Activated CD4-positive, alpha-beta T cell treated with anti-CD3 and anti-CD28 coated beads for 36 hours (primary cell): ENCODE measurements at regions of chr7 and their contacts with region 1.

Region 1: DNA sequence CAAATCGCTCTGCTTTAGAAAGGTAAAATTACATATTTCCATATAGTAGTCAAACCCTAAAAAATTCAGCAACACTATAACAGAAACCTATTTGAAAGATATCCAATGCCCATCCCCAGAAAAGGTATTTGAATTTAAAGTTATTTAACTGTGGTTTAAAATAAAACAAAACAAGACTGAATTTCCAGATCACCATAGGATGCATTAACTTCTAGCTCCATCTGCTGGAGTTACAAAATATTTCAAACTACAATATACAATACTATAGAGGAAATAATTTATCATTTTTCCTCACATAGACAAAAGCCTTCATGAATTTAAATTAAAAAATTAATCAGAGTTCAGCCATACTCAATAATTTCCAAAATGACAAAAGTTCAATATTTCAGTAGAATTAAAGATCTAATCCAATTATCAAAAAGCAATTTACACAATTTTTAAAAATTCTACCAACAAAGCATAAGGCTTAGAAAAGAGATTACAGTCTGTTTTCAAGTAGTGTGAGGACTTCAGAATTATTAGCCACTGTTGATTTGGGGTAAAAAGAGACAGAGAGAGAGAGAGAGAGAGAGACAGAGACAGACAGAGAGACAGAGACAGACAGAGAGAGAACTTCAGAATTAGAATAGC is 75.9 kb downstream of the LMBR1 start:
- DNase-seq: no peak
- ATAC-seq: no peak
- H3K4me3 Mint-ChIP-seq: no peak overlapping the region
- H3K27ac Mint-ChIP-seq: no peak overlapping the region
- H3K4me1 Mint-ChIP-seq: no peaks in the 10 kb centered on the region
- H3K27me3 Mint-ChIP-seq: no peaks in the 10 kb centered on the region

Region 2: GRCh38 chr7:155796381-155797261 is 1020.4 kb before region 1 on chr7:
- CTCF ChIA-PET with region 1: no interaction called
- POLR2A ChIA-PET with region 1: no interaction called
- intact Hi-C with region 1: loop called in 1 of 2 experiments (anchors 1 kb)
- DNase-seq: peak; percentile 82
- ATAC-seq: peak; percentile 85
- H3K4me3 Mint-ChIP-seq: no peak overlapping the region
- H3K27ac Mint-ChIP-seq: no peak overlapping the region
- H3K4me1 Mint-ChIP-seq: no peaks in the 10 kb centered on the region
- H3K27me3 Mint-ChIP-seq: peaks cover 25% of the 10 kb centered on the region

Region 3: DNA sequence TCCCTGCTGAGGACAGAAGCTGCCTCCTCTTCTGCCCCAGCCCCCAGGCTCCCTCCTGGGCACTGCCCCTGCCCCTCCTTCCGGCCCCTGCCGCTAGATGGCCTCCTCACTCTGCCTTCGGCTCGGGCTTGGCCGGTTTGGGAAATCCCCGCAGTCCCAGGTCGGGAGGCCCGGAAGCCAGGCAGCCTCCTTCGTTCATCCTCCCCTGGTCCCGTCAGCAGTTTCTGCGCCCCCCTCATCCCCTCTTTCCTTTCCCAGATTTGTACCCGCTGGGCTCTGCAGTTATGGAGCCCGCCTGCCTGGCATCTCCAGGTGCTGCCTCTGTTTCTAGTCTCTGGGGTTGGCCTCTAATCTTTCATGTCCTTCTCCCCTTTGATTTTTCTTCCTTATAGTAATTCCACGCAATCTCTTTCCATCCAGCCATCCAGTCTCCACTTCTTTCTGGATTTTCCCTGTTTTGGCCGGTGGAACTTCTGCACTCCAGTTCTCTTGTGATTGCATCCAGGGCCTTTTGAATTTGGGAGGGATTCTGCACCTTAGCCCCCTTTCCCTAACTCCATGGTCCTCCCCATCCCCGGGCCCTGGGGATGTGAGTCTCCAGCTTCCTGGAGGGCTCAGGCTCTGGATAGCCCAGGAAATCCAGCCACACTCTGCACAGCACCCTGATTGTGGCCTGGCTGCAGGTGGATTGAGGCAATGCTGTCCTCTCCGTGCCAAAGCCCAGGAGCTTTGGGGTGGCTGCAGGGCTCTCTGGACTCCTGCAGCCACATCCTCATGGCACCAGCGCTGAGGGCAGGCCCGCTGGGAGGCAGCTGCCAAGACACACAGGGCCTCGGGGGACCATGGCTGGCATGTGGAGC is 1001.5 kb before region 1 on chr7:
- CTCF ChIA-PET with region 1: no interaction called
- POLR2A ChIA-PET with region 1: no interaction called
- intact Hi-C with region 1: loop called (anchors 1 to 5 kb)
- DNase-seq: peak; percentile 89
- ATAC-seq: peak; percentile 90
- H3K4me3 Mint-ChIP-seq: no peak overlapping the region
- H3K27ac Mint-ChIP-seq: no peak overlapping the region
- H3K4me1 Mint-ChIP-seq: peaks cover 12% of the 10 kb centered on the region
- H3K27me3 Mint-ChIP-seq: peaks cover 41% of the 10 kb centered on the region

Region 4: DNA sequence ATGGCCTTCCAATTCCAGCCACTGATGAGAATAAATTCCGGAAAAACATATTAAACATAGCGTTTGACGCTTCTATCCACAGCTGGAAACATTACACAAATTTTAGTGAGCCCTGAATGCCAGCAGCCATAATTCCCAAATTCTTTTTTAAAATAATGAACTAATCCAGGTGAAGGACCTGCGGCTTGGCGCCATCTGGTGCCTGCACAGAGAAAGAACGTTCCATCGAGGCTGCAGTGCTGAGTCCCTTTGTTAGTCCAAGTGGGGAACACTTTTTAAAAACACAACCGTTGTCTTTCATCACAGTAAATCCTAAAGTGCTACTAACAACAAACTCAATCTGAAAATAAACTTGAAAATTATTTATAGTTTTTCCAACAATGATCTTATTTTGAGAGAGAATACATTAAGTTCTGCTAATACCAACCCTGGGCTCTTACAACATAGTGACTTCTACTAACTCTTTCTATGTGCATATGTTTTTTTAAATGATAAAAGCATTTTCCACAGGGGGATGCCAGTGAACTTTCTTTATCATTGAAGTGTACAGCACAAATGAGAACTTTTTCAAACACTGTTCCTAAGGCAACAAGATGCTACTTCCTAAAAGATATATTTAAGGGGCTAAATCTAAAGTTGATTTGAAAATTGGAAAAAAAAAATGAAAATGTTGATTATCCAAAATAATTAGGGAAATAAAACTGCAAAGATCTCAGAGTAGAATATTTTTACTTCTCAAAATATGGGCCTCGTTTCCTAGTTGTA is 343.4 kb before region 1 on chr7:
- CTCF ChIA-PET with region 1: interaction called, 4 read pairs
- POLR2A ChIA-PET with region 1: no interaction called
- intact Hi-C with region 1: loop called in 1 of 2 experiments (anchors 5 kb)
- DNase-seq: peak; percentile 63
- ATAC-seq: no peak
- H3K4me3 Mint-ChIP-seq: no peak overlapping the region
- H3K27ac Mint-ChIP-seq: no peak overlapping the region
- H3K4me1 Mint-ChIP-seq: no peaks in the 10 kb centered on the region
- H3K27me3 Mint-ChIP-seq: peaks cover 30% of the 10 kb centered on the region

Region 5: GRCh38 chr7:156640257-156640948 is 176.7 kb before region 1 on chr7 and contains the start of gene RNF32:
- CTCF ChIA-PET with region 1: no interaction called
- POLR2A ChIA-PET with region 1: no interaction called
- intact Hi-C with region 1: loop called in 1 of 2 experiments (anchors 5 kb)
- DNase-seq: peak; percentile 100
- ATAC-seq: peak; percentile 90
- H3K4me3 Mint-ChIP-seq: peak within 1 kb of the TSS; percentile 76
- H3K27ac Mint-ChIP-seq: peak within 1 kb of the TSS; percentile 87
- H3K4me1 Mint-ChIP-seq: peaks cover 15% of the 10 kb centered on the region
- H3K27me3 Mint-ChIP-seq: peaks cover 29% of the 10 kb centered on the region
- total RNA-seq, gene RNF32: 0.71 to 0.90 TPM

Region 6: DNA sequence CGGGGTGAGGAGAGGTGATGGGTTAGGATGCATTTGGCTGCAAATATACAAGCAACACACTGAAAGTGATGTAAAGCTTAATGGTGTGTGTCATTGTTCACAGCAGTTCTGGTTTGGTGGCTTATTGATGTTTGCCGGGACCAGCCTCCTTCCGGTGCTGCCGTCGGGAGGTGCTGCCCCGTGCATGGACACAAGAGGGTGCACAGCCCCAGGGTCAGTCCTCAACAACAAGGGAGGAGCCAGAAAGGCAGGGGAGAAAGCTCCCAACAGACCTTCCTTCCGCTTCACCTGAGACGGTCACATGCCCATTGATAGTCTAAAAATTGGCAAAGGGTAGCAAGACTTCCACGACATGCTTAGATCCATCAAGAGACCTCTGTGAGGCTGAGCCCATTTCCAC is 167.0 kb before region 1 on chr7:
- CTCF ChIA-PET with region 1: no interaction called
- POLR2A ChIA-PET with region 1: no interaction called
- intact Hi-C with region 1: loop called in 1 of 2 experiments (anchors 1 kb)
- DNase-seq: peak; percentile 48
- ATAC-seq: peak; percentile 26
- H3K4me3 Mint-ChIP-seq: no peak overlapping the region
- H3K27ac Mint-ChIP-seq: no peak overlapping the region
- H3K4me1 Mint-ChIP-seq: no peaks in the 10 kb centered on the region
- H3K27me3 Mint-ChIP-seq: peaks cover 64% of the 10 kb centered on the region